ENCODE measurements at regions of chr2 and their contacts with region 1.

Region 1: GRCh38 chr2:234135720-234136221 is 85.3 kb downstream of the SPP2 start:
- DNase-seq: peak; percentile 72
- ATAC-seq: peak; percentile 84
- H3K4me3 Mint-ChIP-seq: no peak overlapping the region
- H3K27ac Mint-ChIP-seq: no peak overlapping the region
- H3K4me1 Mint-ChIP-seq: peaks cover 22% of the 10 kb centered on the region
- H3K27me3 Mint-ChIP-seq: peaks cover 16% of the 10 kb centered on the region

Region 2: GRCh38 chr2:234146087-234146826 is 10.5 kb after region 1 on chr2:
- CTCF ChIA-PET with region 1: interaction called, 15 read pairs
- POLR2A ChIA-PET with region 1: no interaction called
- DNase-seq: no peak
- ATAC-seq: no peak
- H3K4me3 Mint-ChIP-seq: no peak overlapping the region
- H3K27ac Mint-ChIP-seq: peak overlapping the region; percentile 62
- H3K4me1 Mint-ChIP-seq: peaks cover 29% of the 10 kb centered on the region
- H3K27me3 Mint-ChIP-seq: peaks cover 3% of the 10 kb centered on the region

Region 3: DNA sequence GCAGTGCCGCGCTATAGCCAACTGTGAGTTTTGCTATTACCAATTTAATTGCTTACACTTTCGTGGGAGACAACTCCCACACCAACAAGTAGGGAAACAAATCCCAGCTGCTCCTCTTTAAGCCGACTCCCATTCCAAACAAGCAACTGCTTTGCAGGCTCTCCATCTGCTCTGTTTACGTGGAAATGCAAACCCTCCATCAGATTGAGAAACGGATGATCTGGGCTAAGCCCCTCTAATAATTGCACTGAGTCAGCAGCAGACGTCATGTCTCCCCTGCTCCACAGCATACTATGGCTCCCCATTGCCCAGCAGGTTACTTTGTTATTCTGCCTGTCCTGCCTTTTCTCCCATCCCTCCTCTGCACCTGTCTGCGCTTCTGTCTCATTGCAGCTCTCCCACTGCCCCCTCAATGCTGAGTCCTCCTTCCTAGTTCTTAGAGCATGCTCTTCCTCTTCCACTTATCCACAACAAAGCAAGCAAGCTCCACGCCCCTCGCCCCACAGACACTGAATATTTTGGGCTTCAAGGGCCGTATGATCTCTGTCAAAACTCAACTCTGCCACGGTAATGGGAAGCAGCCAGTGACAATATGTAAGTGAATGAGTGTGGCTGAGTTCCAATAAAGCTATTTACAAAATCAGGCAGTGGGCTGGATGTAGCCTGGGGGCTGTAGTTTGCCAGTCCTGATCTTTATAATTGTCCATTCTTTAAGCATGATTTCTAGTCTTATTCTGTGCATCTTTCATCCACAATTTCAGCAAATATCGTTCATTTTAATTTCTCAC is 400.6 kb after region 1 on chr2:
- CTCF ChIA-PET with region 1: interaction called, 11 read pairs
- POLR2A ChIA-PET with region 1: no interaction called
- DNase-seq: no peak
- ATAC-seq: no peak
- H3K4me3 Mint-ChIP-seq: no peak overlapping the region
- H3K27ac Mint-ChIP-seq: no peak overlapping the region
- H3K4me1 Mint-ChIP-seq: no peaks in the 10 kb centered on the region
- H3K27me3 Mint-ChIP-seq: no peaks in the 10 kb centered on the region

Measured in activated CD8-positive, alpha-beta T cell treated with anti-CD3 and anti-CD28 coated beads, Interleukin-2, amount 10 ng/mL, durations not matched to agents 7 days and 5 days (primary cell).